ENCODE measurements at regions of chr16 and their contacts with region 1.

Region 1: GRCh38 chr16:89873972-89874689 is 739 bp downstream of the TCF25 start:
- DNase-seq: peak; percentile 89 to 96 (median 92)
- ATAC-seq: peak; percentile 70 to 82
- H3K4me3 Mint-ChIP-seq: peak overlapping the region; percentile 83 to 96 (median 91)
- H3K27ac Mint-ChIP-seq: peak overlapping the region; percentile 63 to 99 (median 98)
- H3K4me1 Mint-ChIP-seq: peaks cover 3 to 26% (median 21%) of the 10 kb centered on the region in 4 donors
- H3K27me3 Mint-ChIP-seq: no peaks in the 10 kb centered on the region

Region 2: GRCh38 chr16:89909777-89910716 is 35.9 kb after region 1 on chr16:
- POLR2A ChIA-PET with region 1: interaction called, 15 read pairs
- DNase-seq: peak; percentile 42 to 79 (median 66)
- ATAC-seq: peak; percentile 82 to 88
- H3K4me3 Mint-ChIP-seq: no peak overlapping the region
- H3K27ac Mint-ChIP-seq: peak overlapping the region in 3 of 10 donors; percentile 38 to 74 (median 60)
- H3K4me1 Mint-ChIP-seq: peaks cover 8 to 22% (median 8%) of the 10 kb centered on the region in 4 donors
- H3K27me3 Mint-ChIP-seq: no peaks in the 10 kb centered on the region